HCT116 (cell line): ENCODE measurements at regions of chr20 and their contacts with region 1.

Region 1: GRCh38 chr20:25539742-25540672 is 45.3 kb downstream of the NINL start:
- DNase-seq: peak; percentile 16
- ATAC-seq: peak; percentile 92
- H3K4me3 ChIP-seq: no peak overlapping the region
- H3K27ac ChIP-seq: no peak overlapping the region
- H3K4me1 ChIP-seq: peaks cover 4 to 14% of the 10 kb centered on the region in 2 experiments; a peak in 1 of 4 replicates
- H3K27me3 ChIP-seq: no peaks in the 10 kb centered on the region
- CTCF ChIP-seq: peak; percentile 23 to 55 (median 42); a peak in 4 of 6 replicates
- POLR2A ChIP-seq: no peak
- RAD21 ChIP-seq: peak; percentile 56

Region 2: DNA sequence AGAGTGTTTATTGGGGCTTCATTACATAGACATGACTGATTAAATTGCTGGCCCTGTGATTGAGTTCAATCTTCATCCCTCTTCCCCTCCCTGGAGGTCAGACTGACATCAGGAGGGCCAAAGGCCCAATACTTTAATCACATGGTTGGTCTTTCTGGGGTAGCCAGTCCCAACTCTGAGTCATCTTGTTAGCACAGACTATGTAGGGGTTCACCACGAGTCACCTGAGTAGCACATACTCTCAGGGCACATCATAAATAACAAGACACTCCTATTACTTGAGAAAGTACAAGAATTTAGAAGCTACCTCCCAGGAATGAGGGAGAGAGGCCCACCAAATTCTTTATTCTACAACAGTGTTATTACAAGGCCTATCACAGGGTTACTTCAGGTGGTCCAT is 121.2 kb before region 1 on chr20:
- CTCF ChIA-PET with region 1: no interaction called
- POLR2A ChIA-PET with region 1: no interaction called
- RAD21 ChIA-PET with region 1: no interaction called
- intact Hi-C with region 1: loop called (anchors 10 kb)
- DNase-seq: no peak
- ATAC-seq: peak; percentile 38; the same call in 1 of the 2 replicates
- H3K4me3 ChIP-seq: no peak overlapping the region
- H3K27ac ChIP-seq: no peak overlapping the region
- H3K4me1 ChIP-seq: peaks cover 0 to 9% of the 10 kb centered on the region in 2 experiments; a peak in 1 of 4 replicates
- H3K27me3 ChIP-seq: no peaks in the 10 kb centered on the region
- CTCF ChIP-seq: no peak
- POLR2A ChIP-seq: no peak
- RAD21 ChIP-seq: no peak